Transverse colon (tissue), 4 donors: ENCODE measurements at regions of chr11 and their contacts with region 1.

Region 1: GRCh38 chr11:119641983-119642745 is 86.8 kb downstream of the NECTIN1 start:
- DNase-seq: no peak
- H3K4me3 ChIP-seq: no peak overlapping the region
- H3K27ac ChIP-seq: no peak overlapping the region
- H3K4me1 ChIP-seq: no peaks in the 10 kb centered on the region
- H3K27me3 ChIP-seq: no peaks in the 10 kb centered on the region
- CTCF ChIP-seq: peak in 4 of 5 experiments; percentile 43 to 60 (median 49)
- EP300 ChIP-seq: no peak
- POLR2A ChIP-seq: no peak

Region 2: DNA sequence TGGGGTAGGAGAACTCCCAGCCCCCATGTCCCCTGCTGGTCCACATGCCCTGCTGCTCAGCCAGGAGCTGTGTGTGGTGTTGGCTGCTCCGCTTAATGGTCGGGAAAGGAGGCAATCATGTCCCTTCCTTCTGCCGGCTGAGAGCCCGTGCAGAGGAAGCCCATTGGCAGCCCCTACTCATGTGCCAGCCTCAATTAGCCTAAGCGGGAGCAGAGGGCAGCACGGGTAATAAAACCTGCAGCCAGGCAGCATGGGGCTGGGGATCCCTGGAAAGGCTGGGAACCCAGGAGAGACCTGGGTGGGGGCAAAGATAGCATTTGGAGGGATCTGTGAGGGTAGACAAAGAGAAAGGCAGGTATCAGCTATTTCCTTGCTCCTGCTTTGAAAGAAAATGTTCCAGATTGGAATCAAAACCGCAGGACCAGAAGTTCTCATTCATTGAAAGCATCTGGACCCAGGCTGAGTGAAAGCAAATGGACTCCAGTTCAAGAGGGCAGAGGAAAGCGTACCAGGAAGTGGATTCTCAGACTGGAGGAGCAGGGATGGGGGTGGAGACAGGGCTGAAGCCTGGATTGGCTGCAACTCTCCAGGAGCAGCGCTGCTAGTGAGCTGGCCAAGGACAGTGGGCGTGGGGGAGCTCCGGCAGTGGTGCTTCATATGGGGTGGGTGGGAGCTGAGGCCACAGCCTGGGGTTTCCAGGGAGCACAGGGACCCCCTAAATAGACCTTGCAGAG is 190.2 kb after region 1 on chr11:
- in situ Hi-C with region 1: no loop called
- intact Hi-C with region 1: loop called (anchors 10 kb)
- DNase-seq: peak; percentile 70
- H3K4me3 ChIP-seq: no peak overlapping the region
- H3K27ac ChIP-seq: peak overlapping the region in 3 of 4 donors; percentile 9 to 70 (median 53)
- H3K4me1 ChIP-seq: peaks cover 0 to 11% (median 7%) of the 10 kb centered on the region in 4 donors
- H3K27me3 ChIP-seq: no peaks in the 10 kb centered on the region
- CTCF ChIP-seq: no peak
- EP300 ChIP-seq: no peak
- POLR2A ChIP-seq: no peak

Region 3: DNA sequence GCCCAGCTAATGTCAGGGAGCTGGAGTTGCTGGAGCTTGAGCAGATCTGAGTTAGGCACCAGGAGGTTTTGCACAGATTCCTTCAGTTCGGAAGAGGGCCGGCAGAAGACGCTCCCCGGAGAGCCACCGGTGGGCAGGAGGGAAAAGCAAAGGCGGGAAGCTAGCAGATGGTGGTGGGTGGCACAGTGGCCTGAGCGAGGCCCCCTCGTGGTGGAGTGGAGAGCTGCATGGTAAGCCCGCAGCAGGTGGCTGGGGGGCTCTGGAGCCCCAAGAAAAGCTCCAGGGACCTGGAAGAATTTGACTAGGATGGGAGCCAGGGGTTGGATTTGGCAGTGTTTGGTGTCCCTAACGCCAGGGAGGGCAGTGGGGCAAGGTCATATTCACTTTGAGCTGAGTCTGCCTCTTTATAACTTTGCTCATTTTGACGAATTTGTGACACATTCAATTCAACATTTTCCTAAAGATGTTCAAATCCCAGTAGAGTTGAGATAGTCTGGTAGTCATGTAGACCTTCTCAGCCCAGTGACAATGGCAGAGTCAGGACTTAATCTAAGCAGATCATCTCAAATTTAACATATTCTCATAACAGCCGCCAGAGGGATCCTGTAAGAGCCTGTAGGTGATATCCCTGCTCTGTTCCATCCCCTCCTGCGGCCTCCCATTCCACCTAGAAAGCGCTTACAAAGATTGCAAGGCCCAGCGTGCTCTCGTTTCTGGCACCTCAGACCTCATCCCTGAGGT is 437.8 kb after region 1 on chr11:
- in situ Hi-C with region 1: no loop called
- intact Hi-C with region 1: no loop called
- DNase-seq: no peak
- H3K4me3 ChIP-seq: no peak overlapping the region
- H3K27ac ChIP-seq: no peak overlapping the region
- H3K4me1 ChIP-seq: no peaks in the 10 kb centered on the region
- H3K27me3 ChIP-seq: peaks cover 8% of the 10 kb centered on the region
- CTCF ChIP-seq: peak; percentile 48 to 60 (median 55)
- EP300 ChIP-seq: no peak
- POLR2A ChIP-seq: no peak